ENCODE measurements at regions of chr16 and their contacts with region 1.

Region 1: GRCh38 chr16:11370084-11370931 is 25.0 kb downstream of the RMI2 start:
- DNase-seq: peak; percentile 78
- ATAC-seq: peak; percentile 70
- H3K4me3 ChIP-seq: peak overlapping the region; percentile 23 to 56 (median 25); a peak in 3 of 6 replicates
- H3K27ac ChIP-seq: peak overlapping the region; percentile 74
- H3K4me1 ChIP-seq: peaks cover 68% of the 10 kb centered on the region
- H3K27me3 ChIP-seq: no peaks in the 10 kb centered on the region
- CTCF ChIP-seq: no peak
- EP300 ChIP-seq: peak in 1 of 2 experiments; percentile 41; a peak in 2 of 4 replicates
- POLR2A ChIP-seq: no peak; a peak in 1 of 4 replicates
- RAD21 ChIP-seq: no peak

Region 2: GRCh38 chr16:10949370-10949970 is 420.8 kb before region 1 on chr16:
- CTCF ChIA-PET with region 1: no interaction called
- POLR2A ChIA-PET with region 1: no interaction called
- in situ Hi-C with region 1: no loop called
- intact Hi-C with region 1: no loop called
- DNase-seq: no peak
- ATAC-seq: no peak
- H3K4me3 ChIP-seq: no peak overlapping the region
- H3K27ac ChIP-seq: no peak overlapping the region
- H3K4me1 ChIP-seq: peaks cover 29% of the 10 kb centered on the region
- H3K27me3 ChIP-seq: no peaks in the 10 kb centered on the region; a peak in 1 of 5 replicates
- CTCF ChIP-seq: no peak
- EP300 ChIP-seq: no peak
- POLR2A ChIP-seq: no peak
- RAD21 ChIP-seq: no peak

Region 3: GRCh38 chr16:11016993-11017392 is 353.3 kb before region 1 on chr16:
- CTCF ChIA-PET with region 1: no interaction called
- POLR2A ChIA-PET with region 1: interaction called, 11 read pairs
- in situ Hi-C with region 1: no loop called
- intact Hi-C with region 1: no loop called
- DNase-seq: peak; percentile 74
- ATAC-seq: peak; percentile 58
- H3K4me3 ChIP-seq: no peak overlapping the region
- H3K27ac ChIP-seq: peak overlapping the region; percentile 8
- H3K4me1 ChIP-seq: peaks cover 22% of the 10 kb centered on the region
- H3K27me3 ChIP-seq: no peaks in the 10 kb centered on the region
- CTCF ChIP-seq: no peak
- EP300 ChIP-seq: no peak
- POLR2A ChIP-seq: no peak
- RAD21 ChIP-seq: no peak

Region 4: DNA sequence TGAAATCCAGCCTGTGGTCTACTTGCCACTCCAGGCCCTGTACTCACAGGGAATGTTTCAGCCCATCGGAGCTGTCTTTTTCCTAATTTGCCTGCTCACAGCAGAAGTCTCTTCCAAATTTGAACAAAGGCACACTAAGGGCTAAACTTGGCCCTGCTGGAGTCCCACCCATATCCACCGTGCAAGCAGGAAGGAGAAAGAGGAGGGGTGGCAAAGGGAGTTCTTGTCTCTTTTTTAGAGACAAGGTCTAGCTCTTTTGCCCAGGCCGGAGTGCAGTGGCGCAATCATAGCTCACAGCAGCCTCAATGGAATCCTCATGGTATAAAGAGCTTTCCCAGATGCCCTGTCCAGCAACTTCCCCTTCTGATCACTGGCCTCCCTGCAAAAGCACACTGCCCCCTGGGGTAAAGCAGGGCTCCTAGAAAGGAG is 86.5 kb before region 1 on chr16:
- CTCF ChIA-PET with region 1: no interaction called
- POLR2A ChIA-PET with region 1: interaction called, 23 read pairs
- in situ Hi-C with region 1: no loop called
- intact Hi-C with region 1: no loop called
- DNase-seq: peak; percentile 69
- ATAC-seq: peak; percentile 45
- H3K4me3 ChIP-seq: no peak overlapping the region
- H3K27ac ChIP-seq: peak overlapping the region; percentile 52
- H3K4me1 ChIP-seq: peaks cover 91% of the 10 kb centered on the region
- H3K27me3 ChIP-seq: no peaks in the 10 kb centered on the region
- CTCF ChIP-seq: peak; percentile 45
- EP300 ChIP-seq: peak in 1 of 2 experiments; percentile 45; a peak in 1 of 4 replicates
- POLR2A ChIP-seq: no peak
- RAD21 ChIP-seq: peak; percentile 40; the same call in 1 of the 2 replicates

Region 5: GRCh38 chr16:11312718-11313492 is 57.4 kb before region 1 on chr16:
- CTCF ChIA-PET with region 1: no interaction called
- POLR2A ChIA-PET with region 1: interaction called, 28 read pairs
- in situ Hi-C with region 1: no loop called
- intact Hi-C with region 1: no loop called
- DNase-seq: peak; percentile 72
- ATAC-seq: no peak
- H3K4me3 ChIP-seq: peak overlapping the region; percentile 4 to 49 (median 34); a peak in 4 of 6 replicates
- H3K27ac ChIP-seq: peak overlapping the region; percentile 88
- H3K4me1 ChIP-seq: peaks cover 73% of the 10 kb centered on the region
- H3K27me3 ChIP-seq: no peaks in the 10 kb centered on the region
- CTCF ChIP-seq: no peak; the same call in 1 of the 2 replicates
- EP300 ChIP-seq: 0 out of 4 replicates have a peak, but pooled peaks of 1 of the 2 experiments have one; percentile 18
- POLR2A ChIP-seq: peak; percentile 11 to 46
- RAD21 ChIP-seq: no peak

Region 6: GRCh38 chr16:11356573-11357331 is 13.6 kb before region 1 on chr16:
- CTCF ChIA-PET with region 1: interaction called, 7 read pairs
- POLR2A ChIA-PET with region 1: interaction called, 77 read pairs
- in situ Hi-C with region 1: no loop called
- intact Hi-C with region 1: no loop called
- DNase-seq: peak; percentile 81
- ATAC-seq: peak; percentile 93
- H3K4me3 ChIP-seq: no peak overlapping the region
- H3K27ac ChIP-seq: no peak overlapping the region
- H3K4me1 ChIP-seq: peaks cover 62% of the 10 kb centered on the region
- H3K27me3 ChIP-seq: no peaks in the 10 kb centered on the region
- CTCF ChIP-seq: peak; percentile 99
- EP300 ChIP-seq: no peak
- POLR2A ChIP-seq: no peak
- RAD21 ChIP-seq: peak; percentile 99

Region 7: DNA sequence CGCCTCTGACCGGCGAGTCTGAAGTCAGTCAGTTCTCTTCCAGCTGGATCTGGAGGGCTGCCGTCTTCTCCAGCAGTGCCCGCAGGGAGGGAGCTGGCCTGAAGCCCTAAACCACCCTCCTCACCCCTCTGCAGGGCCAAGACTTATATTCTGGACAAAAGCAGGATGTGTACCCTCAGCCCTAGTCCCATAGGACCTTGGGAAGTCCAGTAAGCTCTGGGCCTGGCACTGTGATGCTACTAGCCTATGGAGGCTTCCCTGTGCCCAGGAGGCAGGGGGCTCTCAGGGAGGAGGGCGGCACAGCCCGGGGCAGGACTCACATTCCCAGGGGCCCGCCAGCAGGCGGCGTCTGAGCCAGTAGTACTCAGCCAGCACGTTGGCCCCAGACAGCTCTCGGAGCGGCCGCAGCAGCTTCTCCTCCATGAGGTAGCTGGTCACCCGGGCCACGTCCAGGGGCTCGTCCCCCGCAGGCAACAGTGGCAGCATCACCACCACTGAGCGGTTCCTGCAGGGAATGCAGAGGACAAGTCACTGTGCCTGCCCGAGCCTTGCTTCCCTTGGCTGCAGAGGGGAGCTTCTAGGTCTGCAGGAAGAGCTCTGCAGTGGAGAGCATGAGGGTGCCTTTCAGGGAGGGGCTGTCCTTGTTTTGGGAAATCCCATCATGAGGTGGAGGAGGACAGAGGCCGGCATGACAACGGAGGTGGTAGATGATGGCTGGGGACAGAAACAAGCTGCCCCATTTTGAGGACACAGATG is 16.7 kb after region 1 on chr16:
- CTCF ChIA-PET with region 1: interaction called, 3 read pairs
- POLR2A ChIA-PET with region 1: interaction called, 31 read pairs
- in situ Hi-C with region 1: no loop called
- intact Hi-C with region 1: no loop called
- DNase-seq: peak; percentile 74
- ATAC-seq: peak; percentile 89
- H3K4me3 ChIP-seq: peak overlapping the region; percentile 4 to 56 (median 15); a peak in 3 of 6 replicates
- H3K27ac ChIP-seq: no peak overlapping the region
- H3K4me1 ChIP-seq: peaks cover 45% of the 10 kb centered on the region
- H3K27me3 ChIP-seq: peaks cover 36 to 85% of the 10 kb centered on the region in 2 experiments
- CTCF ChIP-seq: peak; percentile 91
- EP300 ChIP-seq: no peak
- POLR2A ChIP-seq: no peak
- RAD21 ChIP-seq: peak; percentile 90